Calu3 (cell line): ENCODE measurements at regions of chr1 and their contacts with region 1.

Region 1: GRCh38 chr1:171913385-171913784 is 72.1 kb downstream of the DNM3 start:
- DNase-seq: peak; percentile 78
- H3K4me3 Mint-ChIP-seq: no peak overlapping the region
- H3K27ac Mint-ChIP-seq: peak overlapping the region; percentile 62
- H3K4me1 Mint-ChIP-seq: peaks cover 7% of the 10 kb centered on the region
- H3K27me3 Mint-ChIP-seq: no peaks in the 10 kb centered on the region
- CTCF ChIP-seq: no peak

Region 2: DNA sequence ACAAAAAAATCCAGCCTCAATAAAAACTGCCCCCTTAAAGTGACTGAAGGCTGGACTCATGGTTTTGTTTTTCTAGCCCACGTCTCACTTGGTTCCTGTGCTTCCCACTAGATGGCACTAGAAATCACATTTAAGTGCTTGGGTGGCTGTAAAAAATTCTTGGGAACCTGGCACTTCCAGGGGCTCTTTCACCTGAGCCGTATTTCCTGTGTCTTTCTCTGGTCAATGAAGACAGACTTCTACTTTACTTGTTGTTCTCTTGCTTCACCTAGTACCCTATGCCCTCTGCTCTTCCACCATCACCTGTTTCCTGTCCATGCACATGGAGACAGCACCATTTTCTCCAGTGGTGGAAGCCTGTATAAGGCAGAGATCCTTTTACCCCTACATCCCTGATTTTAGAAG is 111.9 kb before region 1 on chr1:
- CTCF ChIA-PET with region 1: interaction called, 7 read pairs
- intact Hi-C with region 1: loop called (anchors 1 kb)
- DNase-seq: peak; percentile 40
- H3K4me3 Mint-ChIP-seq: no peak overlapping the region
- H3K27ac Mint-ChIP-seq: no peak overlapping the region
- H3K4me1 Mint-ChIP-seq: peaks cover 8% of the 10 kb centered on the region
- H3K27me3 Mint-ChIP-seq: no peaks in the 10 kb centered on the region
- CTCF ChIP-seq: peak; percentile 74

Region 3: GRCh38 chr1:171828794-171829193 is 84.6 kb before region 1 on chr1:
- CTCF ChIA-PET with region 1: no interaction called
- intact Hi-C with region 1: no loop called
- DNase-seq: no peak
- H3K4me3 Mint-ChIP-seq: no peak overlapping the region
- H3K27ac Mint-ChIP-seq: no peak overlapping the region
- H3K4me1 Mint-ChIP-seq: no peaks in the 10 kb centered on the region
- H3K27me3 Mint-ChIP-seq: peaks cover 41% of the 10 kb centered on the region
- CTCF ChIP-seq: no peak

Region 4: GRCh38 chr1:171841050-171841940 is 72.1 kb before region 1 on chr1 and contains the start of gene DNM3:
- CTCF ChIA-PET with region 1: interaction called, 3 read pairs
- intact Hi-C with region 1: loop called (anchors 5 kb)
- DNase-seq: peak; percentile 85
- H3K4me3 Mint-ChIP-seq: peak within 1 kb of the TSS; percentile 82
- H3K27ac Mint-ChIP-seq: peak within 1 kb of the TSS; percentile 51
- H3K4me1 Mint-ChIP-seq: peaks cover 21% of the 10 kb centered on the region
- H3K27me3 Mint-ChIP-seq: peaks cover 64% of the 10 kb centered on the region
- CTCF ChIP-seq: no peak
- total RNA-seq, gene DNM3: 1.2 and 1.3 TPM in 2 replicates

Region 5: GRCh38 chr1:171868217-171868803 is 45.1 kb before region 1 on chr1:
- CTCF ChIA-PET with region 1: no interaction called
- intact Hi-C with region 1: loop called (anchors 5 kb)
- DNase-seq: peak; percentile 12
- H3K4me3 Mint-ChIP-seq: no peak overlapping the region
- H3K27ac Mint-ChIP-seq: no peak overlapping the region
- H3K4me1 Mint-ChIP-seq: no peaks in the 10 kb centered on the region
- H3K27me3 Mint-ChIP-seq: peaks cover 3% of the 10 kb centered on the region
- CTCF ChIP-seq: no peak

Region 6: DNA sequence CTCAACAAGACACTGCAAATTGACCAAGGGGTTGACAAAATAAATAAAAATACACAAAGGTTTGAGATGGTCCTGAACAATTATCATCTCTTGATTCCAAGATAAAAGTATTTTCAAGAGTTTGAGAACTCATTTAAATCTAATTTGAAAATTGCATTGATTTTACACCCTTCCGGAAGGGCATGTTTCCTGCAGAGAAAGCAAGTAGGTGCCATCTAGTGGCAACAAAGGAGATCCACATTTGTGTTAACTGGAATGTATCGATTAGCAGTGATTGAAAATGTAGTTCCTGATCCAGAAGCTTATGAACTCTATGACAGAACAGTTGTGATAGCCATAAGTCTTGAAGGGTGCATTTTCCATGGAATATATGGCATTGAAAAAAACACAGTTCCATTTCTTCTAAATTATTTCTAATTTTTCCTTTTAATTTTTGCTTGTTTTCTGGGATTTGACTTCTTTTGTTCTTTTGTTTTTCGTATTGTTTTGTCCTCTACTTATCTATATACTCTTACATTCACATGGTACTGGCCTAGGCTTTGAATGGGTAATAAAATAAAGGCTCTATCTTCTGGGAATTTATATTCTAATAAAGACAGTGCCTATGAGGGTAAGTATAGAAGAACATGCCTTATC is 71.6 kb after region 1 on chr1:
- CTCF ChIA-PET with region 1: interaction called, 5 read pairs
- intact Hi-C with region 1: loop called (anchors 2 kb)
- DNase-seq: no peak
- H3K4me3 Mint-ChIP-seq: no peak overlapping the region
- H3K27ac Mint-ChIP-seq: no peak overlapping the region
- H3K4me1 Mint-ChIP-seq: peaks cover 14% of the 10 kb centered on the region
- H3K27me3 Mint-ChIP-seq: no peaks in the 10 kb centered on the region
- CTCF ChIP-seq: peak; percentile 89